MCF 10A (cell line): ENCODE measurements at regions of chr12 and their contacts with region 1.

Region 1: GRCh38 chr12:21065845-21066244 is 65.1 kb upstream of the SLCO1B1 start:
- DNase-seq: peak; percentile 14
- H3K4me3 Mint-ChIP-seq: no peak overlapping the region
- H3K27ac Mint-ChIP-seq: no peak overlapping the region
- H3K4me1 Mint-ChIP-seq: no peaks in the 10 kb centered on the region
- H3K27me3 Mint-ChIP-seq: no peaks in the 10 kb centered on the region
- CTCF ChIP-seq: peak; percentile 14

Region 2: GRCh38 chr12:20646239-20646827 is 419.5 kb before region 1 on chr12:
- CTCF ChIA-PET with region 1: no interaction called
- POLR2A ChIA-PET with region 1: no interaction called
- intact Hi-C with region 1: loop called (anchors 5 kb)
- DNase-seq: peak; percentile 44
- H3K4me3 Mint-ChIP-seq: no peak overlapping the region
- H3K27ac Mint-ChIP-seq: no peak overlapping the region
- H3K4me1 Mint-ChIP-seq: no peaks in the 10 kb centered on the region
- H3K27me3 Mint-ChIP-seq: peaks cover 19% of the 10 kb centered on the region
- CTCF ChIP-seq: peak; percentile 46

Region 3: DNA sequence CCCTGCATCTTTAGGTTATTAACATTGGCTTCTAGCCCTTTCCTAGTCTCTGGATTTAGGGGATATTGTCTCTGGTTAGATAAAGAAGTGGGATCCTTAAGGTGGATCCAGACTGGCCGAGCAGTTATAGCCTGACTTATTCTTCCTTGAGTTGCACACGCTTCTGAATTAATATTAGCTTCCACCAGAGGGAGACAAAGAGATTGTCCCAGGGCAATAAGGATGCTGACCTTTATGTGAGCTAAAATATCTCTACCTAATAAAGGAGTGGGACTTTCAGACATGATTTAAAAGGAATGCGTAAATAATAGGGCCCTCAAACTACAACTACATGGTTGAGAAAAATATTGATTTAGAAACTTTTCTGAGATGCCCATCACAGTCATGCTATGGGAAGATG is 115.6 kb before region 1 on chr12:
- CTCF ChIA-PET with region 1: interaction called, 10 read pairs
- POLR2A ChIA-PET with region 1: no interaction called
- intact Hi-C with region 1: loop called (anchors 10 kb)
- DNase-seq: peak; percentile 48
- H3K4me3 Mint-ChIP-seq: no peak overlapping the region
- H3K27ac Mint-ChIP-seq: no peak overlapping the region
- H3K4me1 Mint-ChIP-seq: no peaks in the 10 kb centered on the region
- H3K27me3 Mint-ChIP-seq: no peaks in the 10 kb centered on the region
- CTCF ChIP-seq: peak; percentile 30